GM13977 (cell line): ENCODE measurements at regions of chr5 and their contacts with region 1.

Region 1: GRCh38 chr5:141677415-141677814 is 4.6 kb downstream of the ARAP3 start:
- DNase-seq: no peak
- CTCF ChIP-seq: peak; percentile 8

Region 2: DNA sequence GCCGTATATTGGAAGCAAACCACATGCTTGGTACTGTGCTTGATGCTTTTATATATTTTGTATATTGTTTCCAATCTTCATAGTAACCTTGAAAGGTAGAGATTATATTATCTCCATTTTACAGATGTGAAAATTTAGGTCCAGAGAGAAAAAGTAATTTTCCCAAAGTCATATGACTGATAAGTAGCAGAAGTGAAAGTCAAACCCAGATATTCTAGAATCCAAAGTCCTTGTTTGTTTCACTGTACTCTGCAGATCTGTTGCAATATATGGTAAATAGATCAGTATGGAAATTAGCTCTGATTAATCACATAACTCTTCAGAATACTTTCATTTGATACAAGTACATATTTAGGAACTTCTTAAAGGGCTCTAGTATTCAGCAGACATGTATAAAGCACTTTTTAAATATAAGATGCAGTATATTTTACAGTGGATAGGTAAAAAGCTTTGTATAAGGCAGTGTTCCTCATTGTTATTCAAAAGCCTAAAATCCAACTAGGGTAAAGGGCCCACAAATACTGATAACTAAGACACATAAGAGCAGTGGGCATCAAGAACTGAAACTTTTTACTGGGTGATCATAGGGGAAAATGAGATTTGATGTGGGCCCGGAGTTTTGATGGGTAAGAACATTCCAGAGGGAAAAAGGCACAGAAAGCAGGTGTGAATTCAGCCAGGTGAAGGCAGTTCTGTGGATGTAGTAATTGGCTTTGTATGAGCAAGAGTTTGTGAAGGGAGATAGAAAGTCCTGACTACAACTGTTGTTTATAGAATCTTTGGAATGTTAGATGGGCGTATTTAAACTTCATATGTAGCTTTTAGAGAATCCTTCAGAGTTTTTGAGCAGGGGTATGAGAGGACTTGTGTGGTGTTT is 456.2 kb after region 1 on chr5:
- in situ Hi-C with region 1: loop called (anchors 10 kb)
- DNase-seq: no peak
- CTCF ChIP-seq: no peak